Natural killer cell (primary cell): ENCODE measurements at regions of chr18 and their contacts with region 1.

Region 1: GRCh38 chr18:2971741-2972552 is 41.0 kb downstream of the LPIN2 start:
- DNase-seq: peak; percentile 76 to 85
- ATAC-seq: peak; percentile 88 to 94 (median 94)
- H3K4me3 ChIP-seq: peak overlapping the region; percentile 33
- H3K4me3 Mint-ChIP-seq: peak overlapping the region; percentile 90
- H3K27ac ChIP-seq: peak overlapping the region; percentile 96
- H3K27ac Mint-ChIP-seq: peak overlapping the region; percentile 98
- H3K4me1 ChIP-seq: peaks cover 50% of the 10 kb centered on the region
- H3K4me1 Mint-ChIP-seq: peaks cover 76% of the 10 kb centered on the region in 2 donors
- H3K27me3 ChIP-seq: no peaks in the 10 kb centered on the region
- H3K27me3 Mint-ChIP-seq: no peaks in the 10 kb centered on the region
- CTCF ChIP-seq: no peak

Region 2: DNA sequence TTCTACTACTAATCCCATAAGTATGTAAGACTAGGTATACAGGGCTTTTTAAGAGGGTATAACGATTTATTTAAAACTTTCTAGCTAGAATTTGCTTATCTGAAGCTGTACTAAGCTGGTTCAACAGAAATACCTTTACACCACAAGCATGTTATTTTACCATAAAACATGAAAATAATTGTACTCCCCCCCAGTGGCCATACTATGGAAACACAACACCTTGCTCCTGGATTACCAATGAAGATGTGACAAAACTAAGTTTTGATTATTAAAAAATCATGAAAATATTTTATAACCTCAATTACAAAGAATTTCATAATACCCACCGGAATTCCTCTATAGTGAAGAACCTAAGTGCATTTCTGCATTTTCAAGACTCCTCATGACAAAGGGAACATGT is 13.7 kb after region 1 on chr18:
- intact Hi-C with region 1: loop called (anchors 1 kb)
- DNase-seq: peak in 1 of 2 donors; percentile 80
- ATAC-seq: peak; percentile 41 to 54 (median 42)
- H3K4me3 ChIP-seq: no peak overlapping the region
- H3K4me3 Mint-ChIP-seq: no peak overlapping the region
- H3K27ac ChIP-seq: no peak overlapping the region
- H3K27ac Mint-ChIP-seq: peak overlapping the region in 1 of 2 donors; percentile 4
- H3K4me1 ChIP-seq: peaks cover 12% of the 10 kb centered on the region
- H3K4me1 Mint-ChIP-seq: peaks cover 38 to 44% of the 10 kb centered on the region in 2 donors
- H3K27me3 ChIP-seq: no peaks in the 10 kb centered on the region
- H3K27me3 Mint-ChIP-seq: no peaks in the 10 kb centered on the region
- CTCF ChIP-seq: peak; percentile 74

Region 3: GRCh38 chr18:3012964-3013804 is 41.2 kb after region 1 on chr18 and contains the start of gene LPIN2:
- intact Hi-C with region 1: loop called (anchors 2 kb)
- DNase-seq: peak; percentile 92 to 97
- ATAC-seq: peak; percentile 87 to 94 (median 89)
- H3K4me3 ChIP-seq: peak within 1 kb of the TSS; percentile 45
- H3K4me3 Mint-ChIP-seq: peak within 1 kb of the TSS; percentile 95
- H3K27ac ChIP-seq: peak within 1 kb of the TSS; percentile 83
- H3K27ac Mint-ChIP-seq: peak within 1 kb of the TSS; percentile 88
- H3K4me1 ChIP-seq: peaks cover 38% of the 10 kb centered on the region
- H3K4me1 Mint-ChIP-seq: peaks cover 33 to 39% of the 10 kb centered on the region in 2 donors
- H3K27me3 ChIP-seq: no peaks in the 10 kb centered on the region
- H3K27me3 Mint-ChIP-seq: no peaks in the 10 kb centered on the region
- CTCF ChIP-seq: no peak
- total RNA-seq, gene LPIN2: 32.9 to 58.8 (median 57.1) TPM